Endothelial cell of umbilical vein (primary cell): ENCODE measurements at regions of chr3 and their contacts with region 1.

Region 1: GRCh38 chr3:30347679-30348216 is 258.7 kb upstream of the TGFBR2 start:
- DNase-seq: peak; percentile 84
- H3K4me3 ChIP-seq: no peak overlapping the region
- H3K27ac ChIP-seq: peak overlapping the region; percentile 97
- H3K4me1 ChIP-seq: peaks cover 81% of the 10 kb centered on the region
- H3K27me3 ChIP-seq: no peaks in the 10 kb centered on the region
- CTCF ChIP-seq: no peak
- POLR2A ChIP-seq: peak; percentile 86

Region 2: DNA sequence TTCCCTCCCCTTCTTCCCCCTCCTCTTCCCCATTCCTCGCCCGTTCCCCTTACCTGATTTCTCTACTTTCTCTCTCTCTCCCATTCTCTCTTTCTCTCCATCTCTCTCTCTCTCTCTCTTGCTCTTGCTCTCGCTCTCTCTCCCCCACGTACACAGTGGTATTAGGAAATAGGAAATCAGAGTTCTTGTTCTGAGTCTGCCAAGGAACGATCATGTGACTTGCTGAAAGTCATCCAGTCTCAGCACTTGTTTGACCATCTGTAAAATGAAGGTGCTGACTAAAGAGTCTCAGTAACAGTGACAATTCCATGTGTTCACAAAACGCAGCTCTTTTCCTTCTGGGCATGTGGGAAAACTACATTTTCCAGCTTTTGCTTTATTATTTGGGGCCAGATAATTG is 186.4 kb before region 1 on chr3:
- CTCF ChIA-PET with region 1: no interaction called
- POLR2A ChIA-PET with region 1: no interaction called
- dilution Hi-C with region 1: no loop called
- intact Hi-C with region 1: loop called (anchors 2 kb)
- DNase-seq: peak; percentile 27
- H3K4me3 ChIP-seq: no peak overlapping the region
- H3K27ac ChIP-seq: no peak overlapping the region
- H3K4me1 ChIP-seq: peaks cover 30% of the 10 kb centered on the region
- H3K27me3 ChIP-seq: peaks cover 0 to 7% of the 10 kb centered on the region in 2 experiments
- CTCF ChIP-seq: no peak
- POLR2A ChIP-seq: no peak

Region 3: DNA sequence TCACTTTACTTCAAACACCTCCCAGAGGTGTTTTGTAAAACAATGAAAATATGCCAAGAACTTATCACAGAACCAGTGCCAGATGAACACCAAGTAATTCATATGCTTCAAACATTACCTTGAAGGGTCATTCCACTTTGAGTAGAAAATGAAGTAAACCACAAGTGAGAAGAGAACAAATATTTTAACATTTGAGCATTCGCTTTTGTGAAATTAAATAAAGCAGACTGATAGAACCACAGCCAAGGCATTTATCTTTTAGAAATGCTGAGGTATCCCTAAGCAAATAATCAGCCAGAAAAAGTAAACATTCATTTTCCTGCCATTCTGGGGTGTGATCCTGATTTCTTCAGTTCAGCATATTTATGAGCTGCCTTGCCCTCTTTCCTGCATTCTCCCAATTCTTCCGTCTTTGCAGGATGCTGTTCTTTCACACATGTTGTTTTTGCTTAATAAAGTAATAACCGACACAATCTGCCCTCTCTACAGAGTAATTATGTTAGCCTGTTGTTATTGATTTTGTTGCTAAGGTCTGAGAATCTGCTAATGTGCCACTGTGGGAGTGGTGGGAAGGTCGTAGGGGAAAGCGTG is 23.0 kb after region 1 on chr3:
- CTCF ChIA-PET with region 1: no interaction called
- POLR2A ChIA-PET with region 1: no interaction called
- dilution Hi-C with region 1: no loop called
- intact Hi-C with region 1: loop called (anchors 1 kb)
- DNase-seq: peak; percentile 95
- H3K4me3 ChIP-seq: no peak overlapping the region
- H3K27ac ChIP-seq: peak overlapping the region; percentile 49
- H3K4me1 ChIP-seq: peaks cover 17% of the 10 kb centered on the region
- H3K27me3 ChIP-seq: no peaks in the 10 kb centered on the region
- CTCF ChIP-seq: no peak
- POLR2A ChIP-seq: peak; percentile 51

Region 4: GRCh38 chr3:30538787-30539186 is 191.0 kb after region 1 on chr3:
- CTCF ChIA-PET with region 1: no interaction called
- POLR2A ChIA-PET with region 1: interaction called, 3 read pairs
- dilution Hi-C with region 1: no loop called
- intact Hi-C with region 1: loop called (anchors 1 kb)
- DNase-seq: peak; percentile 93
- H3K4me3 ChIP-seq: no peak overlapping the region
- H3K27ac ChIP-seq: peak overlapping the region; percentile 97
- H3K4me1 ChIP-seq: peaks cover 26% of the 10 kb centered on the region
- H3K27me3 ChIP-seq: no peaks in the 10 kb centered on the region
- CTCF ChIP-seq: no peak
- POLR2A ChIP-seq: no peak

Region 5: DNA sequence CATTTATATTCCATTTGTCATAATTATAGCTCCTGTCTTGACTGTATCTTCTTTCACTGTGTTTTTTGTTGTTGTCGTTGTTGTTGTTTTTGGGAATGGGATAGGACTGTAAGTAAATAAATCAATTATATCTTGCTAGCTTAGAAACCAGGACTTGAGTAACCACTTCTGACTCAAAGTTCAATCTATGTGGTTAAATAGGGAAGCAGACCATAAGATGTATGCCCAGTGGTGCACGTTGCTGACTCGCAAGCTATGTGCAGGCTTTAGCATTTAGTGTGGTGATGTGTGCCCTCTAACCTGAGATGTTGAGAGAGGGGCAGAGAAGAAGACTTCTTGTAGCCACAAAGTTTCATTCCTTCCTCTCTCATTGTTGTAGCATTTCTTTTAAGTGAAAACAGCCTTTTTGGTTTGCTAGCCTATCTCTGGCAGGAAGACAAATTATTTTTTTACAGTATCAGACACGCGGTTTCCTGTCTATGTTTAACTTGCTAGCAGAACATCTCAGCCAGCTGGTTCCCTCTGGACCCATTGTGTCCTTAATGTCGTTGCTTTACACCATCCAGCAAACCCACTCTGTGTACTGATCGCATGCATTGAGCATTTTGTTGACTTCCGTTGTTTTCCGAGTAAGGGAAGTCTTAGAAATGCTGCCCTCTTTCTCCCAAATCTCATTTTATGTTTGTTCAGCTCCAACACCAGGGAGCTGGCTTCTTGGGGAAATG is 310.7 kb after region 1 on chr3:
- CTCF ChIA-PET with region 1: interaction called, 3 read pairs
- POLR2A ChIA-PET with region 1: no interaction called
- dilution Hi-C with region 1: no loop called
- intact Hi-C with region 1: loop called (anchors 1 kb)
- DNase-seq: peak; percentile 95
- H3K4me3 ChIP-seq: no peak overlapping the region
- H3K27ac ChIP-seq: peak overlapping the region; percentile 98
- H3K4me1 ChIP-seq: peaks cover 100% of the 10 kb centered on the region
- H3K27me3 ChIP-seq: no peaks in the 10 kb centered on the region
- CTCF ChIP-seq: no peak
- POLR2A ChIP-seq: peak; percentile 68